ENCODE measurements at regions of chr5 and their contacts with region 1.

Region 1: GRCh38 chr5:159156426-159157238 is 52.7 kb downstream of the RNF145 start:
- DNase-seq: peak; percentile 80
- ATAC-seq: peak; percentile 53
- H3K4me3 ChIP-seq: no peak overlapping the region
- H3K4me3 Mint-ChIP-seq: peak overlapping the region; percentile 17
- H3K27ac ChIP-seq: peak overlapping the region; percentile 32 to 73
- H3K27ac Mint-ChIP-seq: peak overlapping the region; percentile 81
- H3K4me1 ChIP-seq: peaks cover 23 to 26% of the 10 kb centered on the region in 2 donors
- H3K4me1 Mint-ChIP-seq: peaks cover 28% of the 10 kb centered on the region
- H3K27me3 ChIP-seq: no peaks in the 10 kb centered on the region
- H3K27me3 Mint-ChIP-seq: no peaks in the 10 kb centered on the region
- CTCF ChIP-seq: peak; percentile 95

Region 2: DNA sequence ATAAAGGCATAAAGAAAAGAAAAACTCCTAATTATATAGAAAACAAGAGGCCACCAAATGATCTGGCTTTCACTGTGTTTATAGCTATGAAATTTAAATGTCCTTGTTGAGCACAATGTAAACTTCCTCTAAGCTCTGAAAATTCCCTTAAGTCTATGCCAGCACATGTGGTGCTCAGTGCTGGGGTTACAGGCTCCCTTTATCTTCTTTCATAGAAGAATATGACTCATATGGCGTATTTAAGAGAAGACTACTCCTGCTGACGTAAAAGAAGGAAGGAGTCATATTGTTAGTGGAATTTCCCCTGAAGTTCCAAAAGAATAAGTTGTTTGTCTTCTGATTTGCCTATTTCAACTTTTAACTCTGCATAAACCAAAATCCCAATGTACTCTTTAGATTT is 22.3 kb after region 1 on chr5:
- CTCF ChIA-PET with region 1: interaction called, 10 read pairs
- POLR2A ChIA-PET with region 1: no interaction called
- intact Hi-C with region 1: no loop called
- DNase-seq: peak; percentile 57
- ATAC-seq: peak; percentile 60
- H3K4me3 ChIP-seq: no peak overlapping the region
- H3K4me3 Mint-ChIP-seq: peak overlapping the region; percentile 45
- H3K27ac ChIP-seq: peak overlapping the region in 1 of 2 donors; percentile 69
- H3K27ac Mint-ChIP-seq: peak overlapping the region; percentile 64
- H3K4me1 ChIP-seq: peaks cover 15 to 34% of the 10 kb centered on the region in 2 donors
- H3K4me1 Mint-ChIP-seq: peaks cover 41% of the 10 kb centered on the region
- H3K27me3 ChIP-seq: no peaks in the 10 kb centered on the region
- H3K27me3 Mint-ChIP-seq: no peaks in the 10 kb centered on the region
- CTCF ChIP-seq: no peak

Region 3: GRCh38 chr5:159215886-159216285 is 59.3 kb after region 1 on chr5:
- CTCF ChIA-PET with region 1: interaction called, 10 read pairs
- POLR2A ChIA-PET with region 1: no interaction called
- intact Hi-C with region 1: no loop called
- DNase-seq: no peak
- ATAC-seq: no peak
- H3K4me3 ChIP-seq: no peak overlapping the region
- H3K4me3 Mint-ChIP-seq: no peak overlapping the region
- H3K27ac ChIP-seq: no peak overlapping the region
- H3K27ac Mint-ChIP-seq: no peak overlapping the region
- H3K4me1 ChIP-seq: peaks cover 8% of the 10 kb centered on the region in 2 donors
- H3K4me1 Mint-ChIP-seq: peaks cover 6% of the 10 kb centered on the region
- H3K27me3 ChIP-seq: no peaks in the 10 kb centered on the region
- H3K27me3 Mint-ChIP-seq: no peaks in the 10 kb centered on the region
- CTCF ChIP-seq: no peak

Region 4: GRCh38 chr5:159286420-159287035 is 129.9 kb after region 1 on chr5:
- CTCF ChIA-PET with region 1: interaction called, 80 read pairs
- POLR2A ChIA-PET with region 1: no interaction called
- intact Hi-C with region 1: loop called (anchors 5 kb)
- DNase-seq: peak; percentile 69
- ATAC-seq: peak; percentile 67
- H3K4me3 ChIP-seq: no peak overlapping the region
- H3K4me3 Mint-ChIP-seq: no peak overlapping the region
- H3K27ac ChIP-seq: no peak overlapping the region
- H3K27ac Mint-ChIP-seq: no peak overlapping the region
- H3K4me1 ChIP-seq: no peaks in the 10 kb centered on the region
- H3K4me1 Mint-ChIP-seq: no peaks in the 10 kb centered on the region
- H3K27me3 ChIP-seq: no peaks in the 10 kb centered on the region
- H3K27me3 Mint-ChIP-seq: no peaks in the 10 kb centered on the region
- CTCF ChIP-seq: peak; percentile 82

Region 5: GRCh38 chr5:159331093-159331973 is 174.7 kb after region 1 on chr5:
- CTCF ChIA-PET with region 1: interaction called, 5 read pairs
- POLR2A ChIA-PET with region 1: no interaction called
- intact Hi-C with region 1: loop called (anchors 5 kb)
- DNase-seq: peak; percentile 83
- ATAC-seq: peak; percentile 55
- H3K4me3 ChIP-seq: peak overlapping the region in 4 of 5 experiments; percentile 51 to 65 (median 56)
- H3K4me3 Mint-ChIP-seq: peak overlapping the region; percentile 93
- H3K27ac ChIP-seq: peak overlapping the region; percentile 92 to 93
- H3K27ac Mint-ChIP-seq: peak overlapping the region; percentile 98
- H3K4me1 ChIP-seq: peaks cover 40 to 55% of the 10 kb centered on the region in 2 donors
- H3K4me1 Mint-ChIP-seq: peaks cover 49% of the 10 kb centered on the region
- H3K27me3 ChIP-seq: no peaks in the 10 kb centered on the region
- H3K27me3 Mint-ChIP-seq: no peaks in the 10 kb centered on the region
- CTCF ChIP-seq: peak; percentile 83

Region 6: GRCh38 chr5:159915904-159916840 is 759.5 kb after region 1 on chr5 and contains the start of gene ADRA1B:
- CTCF ChIA-PET with region 1: interaction called, 12 read pairs
- POLR2A ChIA-PET with region 1: no interaction called
- intact Hi-C with region 1: loop called (anchors 10 kb)
- DNase-seq: peak; percentile 65
- ATAC-seq: peak; percentile 90
- H3K4me3 ChIP-seq: peak within 1 kb of the TSS in 2 of 5 experiments; percentile 29 to 48
- H3K4me3 Mint-ChIP-seq: peak within 1 kb of the TSS; percentile 80
- H3K27ac ChIP-seq: no peak within 1 kb of the TSS
- H3K27ac Mint-ChIP-seq: no peak within 1 kb of the TSS
- H3K4me1 ChIP-seq: peaks cover 10 to 15% of the 10 kb centered on the region in 2 donors
- H3K4me1 Mint-ChIP-seq: peaks cover 16% of the 10 kb centered on the region
- H3K27me3 ChIP-seq: peaks cover 0 to 43% (median 19%) of the 10 kb centered on the region in 4 experiments
- H3K27me3 Mint-ChIP-seq: peaks cover 51% of the 10 kb centered on the region
- CTCF ChIP-seq: peak; percentile 66
- total RNA-seq, gene ADRA1B: not detected in 2 replicates

Measured in B cell (primary cell).